ENCODE measurements at regions of chr19 and their contacts with region 1.

Region 1: GRCh38 chr19:29665215-29665825 is at the start of gene PLEKHF1:
- DNase-seq: peak; percentile 52 to 91 (median 78)
- ATAC-seq: peak; percentile 63
- H3K4me3 ChIP-seq: peak within 1 kb of the TSS; percentile 97
- H3K4me3 Mint-ChIP-seq: peak within 1 kb of the TSS; percentile 93
- H3K27ac ChIP-seq: peak within 1 kb of the TSS; percentile 67 to 85
- H3K27ac Mint-ChIP-seq: peak within 1 kb of the TSS; percentile 98
- H3K4me1 ChIP-seq: peaks cover 58% of the 10 kb centered on the region
- H3K4me1 Mint-ChIP-seq: peaks cover 76% of the 10 kb centered on the region
- H3K27me3 ChIP-seq: no peaks in the 10 kb centered on the region
- H3K27me3 Mint-ChIP-seq: no peaks in the 10 kb centered on the region
- CTCF ChIP-seq: peak; percentile 17
- total RNA-seq, gene PLEKHF1: 37.5 to 41.0 TPM

Region 2: DNA sequence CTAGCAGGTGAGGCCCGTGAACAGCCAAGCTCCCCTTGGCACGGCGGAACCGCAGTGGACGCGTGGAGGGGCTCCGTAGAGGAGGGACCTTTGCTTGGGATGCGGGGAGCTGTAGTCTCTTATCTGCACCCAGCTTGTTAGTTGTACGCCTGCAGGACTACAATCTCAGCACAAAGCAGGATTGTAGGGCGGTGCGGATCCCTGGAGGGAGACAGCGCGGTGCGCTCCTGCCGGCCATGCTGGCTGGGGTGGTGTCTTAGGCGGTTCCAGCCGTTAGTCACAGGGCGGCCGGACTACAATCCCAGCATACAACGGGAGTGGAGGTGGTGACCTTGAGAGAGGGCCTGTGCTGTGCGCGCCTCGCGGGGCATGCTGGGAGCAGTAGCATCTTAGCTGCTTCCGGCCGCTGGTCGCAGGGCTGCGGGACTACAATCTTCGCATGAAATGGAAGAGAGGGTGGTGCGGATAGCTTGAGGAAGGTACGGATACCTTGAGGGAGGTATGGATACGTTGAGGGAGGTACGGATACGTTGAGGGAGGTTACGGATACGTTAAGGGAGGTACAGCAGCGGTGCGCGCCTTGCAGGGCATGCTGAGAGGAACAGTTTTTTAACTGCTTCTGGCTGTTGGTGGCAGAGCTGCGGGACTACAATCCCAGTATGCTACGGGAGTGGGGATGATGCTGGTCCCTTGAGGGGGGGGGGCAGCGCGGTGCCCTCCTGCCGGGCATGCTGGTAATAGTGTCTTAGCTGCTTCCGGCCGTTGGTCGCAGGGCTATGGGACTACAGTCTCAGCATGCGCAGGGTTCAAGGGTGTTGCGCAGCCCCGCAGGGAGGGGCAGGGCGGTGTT is 1871.5 kb before region 1 on chr19:
- CTCF ChIA-PET with region 1: no interaction called
- POLR2A ChIA-PET with region 1: no interaction called
- intact Hi-C with region 1: loop called in 1 of 2 experiments (anchors 10 kb)
- DNase-seq: peak; percentile 82 to 95 (median 88)
- ATAC-seq: peak; percentile 92
- H3K4me3 ChIP-seq: peak overlapping the region; percentile 93
- H3K4me3 Mint-ChIP-seq: peak overlapping the region; percentile 98
- H3K27ac ChIP-seq: peak overlapping the region; percentile 78 to 84
- H3K27ac Mint-ChIP-seq: peak overlapping the region; percentile 86
- H3K4me1 ChIP-seq: peaks cover 26% of the 10 kb centered on the region
- H3K4me1 Mint-ChIP-seq: peaks cover 31% of the 10 kb centered on the region
- H3K27me3 ChIP-seq: no peaks in the 10 kb centered on the region
- H3K27me3 Mint-ChIP-seq: no peaks in the 10 kb centered on the region
- CTCF ChIP-seq: no peak

Region 3: DNA sequence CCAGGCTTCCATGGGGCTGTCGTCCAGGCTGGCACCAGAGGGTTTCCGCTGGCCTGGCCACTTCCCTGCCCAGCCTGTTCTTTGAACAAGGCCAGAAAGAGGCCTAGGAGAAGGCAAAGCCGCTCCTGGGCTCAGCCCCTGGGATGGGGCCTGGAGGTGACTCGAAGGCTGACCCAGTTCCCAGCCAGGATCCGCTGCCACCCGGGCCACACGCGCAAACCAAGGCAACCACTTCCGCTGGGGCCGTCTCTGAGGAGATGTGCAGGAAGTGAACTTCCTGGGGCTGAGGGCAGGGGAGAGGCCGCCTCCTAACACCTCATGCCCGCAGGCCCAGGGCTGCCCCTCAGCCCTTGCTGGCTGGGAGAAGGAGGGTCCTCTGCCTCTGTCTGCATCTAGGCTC is 15.1 kb after region 1 on chr19:
- CTCF ChIA-PET with region 1: interaction called, 14 read pairs
- POLR2A ChIA-PET with region 1: interaction called, 28 read pairs
- intact Hi-C with region 1: loop called in 1 of 2 experiments (anchors 1 kb)
- DNase-seq: peak; percentile 67 to 93 (median 79)
- ATAC-seq: peak; percentile 87
- H3K4me3 ChIP-seq: peak overlapping the region; percentile 22
- H3K4me3 Mint-ChIP-seq: peak overlapping the region; percentile 76
- H3K27ac ChIP-seq: peak overlapping the region; percentile 44 to 61
- H3K27ac Mint-ChIP-seq: peak overlapping the region; percentile 93
- H3K4me1 ChIP-seq: peaks cover 85% of the 10 kb centered on the region
- H3K4me1 Mint-ChIP-seq: peaks cover 76% of the 10 kb centered on the region
- H3K27me3 ChIP-seq: no peaks in the 10 kb centered on the region
- H3K27me3 Mint-ChIP-seq: no peaks in the 10 kb centered on the region
- CTCF ChIP-seq: no peak

Region 4: GRCh38 chr19:29694669-29695627 is 29.6 kb after region 1 on chr19:
- CTCF ChIA-PET with region 1: interaction called, 21 read pairs
- POLR2A ChIA-PET with region 1: interaction called, 3 read pairs
- intact Hi-C with region 1: loop called (anchors 1 to 2 kb)
- DNase-seq: peak; percentile 73 to 90 (median 80)
- ATAC-seq: peak; percentile 95
- H3K4me3 ChIP-seq: no peak overlapping the region
- H3K4me3 Mint-ChIP-seq: no peak overlapping the region
- H3K27ac ChIP-seq: no peak overlapping the region
- H3K27ac Mint-ChIP-seq: peak overlapping the region; percentile 61
- H3K4me1 ChIP-seq: peaks cover 24% of the 10 kb centered on the region
- H3K4me1 Mint-ChIP-seq: peaks cover 18% of the 10 kb centered on the region
- H3K27me3 ChIP-seq: no peaks in the 10 kb centered on the region
- H3K27me3 Mint-ChIP-seq: no peaks in the 10 kb centered on the region
- CTCF ChIP-seq: peak; percentile 92

Region 5: GRCh38 chr19:29811125-29812079 is 146.1 kb after region 1 on chr19 and contains the start of gene CCNE1:
- CTCF ChIA-PET with region 1: no interaction called
- POLR2A ChIA-PET with region 1: no interaction called
- intact Hi-C with region 1: loop called in 1 of 2 experiments (anchors 5 kb)
- DNase-seq: peak; percentile 88 to 100 (median 94)
- ATAC-seq: peak; percentile 90
- H3K4me3 ChIP-seq: peak within 1 kb of the TSS; percentile 58
- H3K4me3 Mint-ChIP-seq: peak within 1 kb of the TSS; percentile 96
- H3K27ac ChIP-seq: peak within 1 kb of the TSS; percentile 50 to 55
- H3K27ac Mint-ChIP-seq: peak within 1 kb of the TSS; percentile 82
- H3K4me1 ChIP-seq: peaks cover 14% of the 10 kb centered on the region
- H3K4me1 Mint-ChIP-seq: peaks cover 11% of the 10 kb centered on the region
- H3K27me3 ChIP-seq: no peaks in the 10 kb centered on the region
- H3K27me3 Mint-ChIP-seq: no peaks in the 10 kb centered on the region
- CTCF ChIP-seq: no peak
- total RNA-seq, gene CCNE1: 4.9 to 5.6 TPM

Measured in CD4-positive, alpha-beta T cell (primary cell).